Panc1 (cell line): ENCODE measurements at regions of chr7 and their contacts with region 1.

Region 1: DNA sequence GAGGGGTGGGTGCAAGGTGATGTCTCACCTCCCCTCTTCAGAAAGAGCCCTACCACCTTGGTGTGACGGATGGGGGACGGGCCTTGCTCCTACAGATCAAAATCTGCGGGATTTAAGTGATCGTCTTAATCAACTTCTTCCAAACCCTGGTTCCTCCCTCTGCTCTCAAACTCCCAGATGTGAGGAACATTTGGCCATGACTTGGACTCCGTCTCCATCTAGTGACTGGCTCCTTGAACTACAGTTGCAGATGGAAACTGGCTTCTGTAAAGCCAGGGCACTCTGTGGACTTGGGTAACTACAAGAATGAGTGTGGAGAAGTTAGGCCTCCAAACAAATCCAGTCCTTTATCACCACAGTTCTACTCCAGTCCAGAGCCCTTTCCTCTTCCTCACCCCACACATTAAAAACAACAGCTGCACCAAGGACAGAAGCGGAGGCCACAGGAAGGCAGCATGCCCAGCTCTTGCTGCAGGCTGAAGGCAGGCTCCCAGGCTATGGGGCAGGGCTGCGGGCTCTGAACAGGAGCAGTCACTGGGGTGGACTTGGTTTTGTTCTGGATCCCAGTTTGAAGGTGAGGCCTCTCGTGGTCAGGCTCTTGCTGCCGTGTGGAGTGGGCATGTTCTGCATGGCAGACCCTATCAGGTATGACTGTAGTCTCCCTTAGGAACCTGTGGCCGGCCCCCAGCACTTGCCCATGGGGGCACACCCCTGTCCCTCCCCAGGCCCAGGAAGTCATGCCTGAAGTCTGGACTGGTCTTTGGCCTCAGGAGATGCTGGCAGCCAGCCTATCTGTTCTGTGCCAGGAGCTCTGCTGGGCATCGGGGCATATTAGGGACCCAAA is 79.4 kb downstream of the VWC2 start:
- DNase-seq: peak; percentile 62
- ATAC-seq: peak; percentile 89
- H3K4me3 ChIP-seq: no peak overlapping the region
- H3K27ac ChIP-seq: no peak overlapping the region
- H3K4me1 ChIP-seq: no peaks in the 10 kb centered on the region
- H3K27me3 ChIP-seq: no peaks in the 10 kb centered on the region
- CTCF ChIP-seq: peak; percentile 92

Region 2: GRCh38 chr7:48109848-48110663 is 1742.8 kb before region 1 on chr7:
- CTCF ChIA-PET with region 1: no interaction called
- POLR2A ChIA-PET with region 1: no interaction called
- in situ Hi-C with region 1: no loop called
- intact Hi-C with region 1: loop called (anchors 5 kb)
- DNase-seq: peak; percentile 90
- ATAC-seq: peak; percentile 77
- H3K4me3 ChIP-seq: no peak overlapping the region
- H3K27ac ChIP-seq: peak overlapping the region; percentile 55
- H3K4me1 ChIP-seq: peaks cover 50% of the 10 kb centered on the region
- H3K27me3 ChIP-seq: no peaks in the 10 kb centered on the region
- CTCF ChIP-seq: peak; percentile 100

Region 3: GRCh38 chr7:48299580-48300169 is 1553.2 kb before region 1 on chr7:
- CTCF ChIA-PET with region 1: no interaction called
- POLR2A ChIA-PET with region 1: no interaction called
- in situ Hi-C with region 1: no loop called
- intact Hi-C with region 1: loop called (anchors 5 kb)
- DNase-seq: peak; percentile 52
- ATAC-seq: peak; percentile 97
- H3K4me3 ChIP-seq: no peak overlapping the region
- H3K27ac ChIP-seq: no peak overlapping the region
- H3K4me1 ChIP-seq: no peaks in the 10 kb centered on the region
- H3K27me3 ChIP-seq: no peaks in the 10 kb centered on the region
- CTCF ChIP-seq: peak; percentile 94

Region 4: DNA sequence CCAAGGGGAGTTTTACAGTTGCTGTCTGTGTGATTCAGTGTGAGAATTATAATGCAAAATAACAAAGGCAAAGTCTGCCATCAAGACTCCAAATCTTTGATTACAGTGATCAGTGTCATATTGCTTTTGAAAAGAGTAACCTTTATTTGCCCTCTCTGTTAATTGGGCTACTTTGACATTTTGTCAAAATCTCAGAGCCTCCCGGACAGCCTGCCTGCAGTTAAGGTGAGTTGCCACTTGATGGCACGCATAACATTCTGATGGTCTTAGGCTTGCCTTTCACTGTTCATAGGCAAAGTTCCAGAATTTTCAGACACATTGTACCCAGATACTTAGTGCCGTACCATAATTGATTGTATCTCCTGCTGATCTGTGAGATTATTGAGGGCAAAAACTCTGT is 1428.1 kb before region 1 on chr7:
- CTCF ChIA-PET with region 1: no interaction called
- POLR2A ChIA-PET with region 1: no interaction called
- in situ Hi-C with region 1: no loop called
- intact Hi-C with region 1: loop called (anchors 5 kb)
- DNase-seq: no peak
- ATAC-seq: no peak
- H3K4me3 ChIP-seq: no peak overlapping the region
- H3K27ac ChIP-seq: peak overlapping the region; percentile 56; the same call in 1 of the 2 replicates
- H3K4me1 ChIP-seq: peaks cover 25% of the 10 kb centered on the region
- H3K27me3 ChIP-seq: no peaks in the 10 kb centered on the region
- CTCF ChIP-seq: peak; percentile 88

Region 5: GRCh38 chr7:49001610-49002033 is 851.2 kb before region 1 on chr7:
- CTCF ChIA-PET with region 1: no interaction called
- POLR2A ChIA-PET with region 1: no interaction called
- in situ Hi-C with region 1: no loop called
- intact Hi-C with region 1: loop called (anchors 5 kb)
- DNase-seq: peak; percentile 32
- ATAC-seq: no peak
- H3K4me3 ChIP-seq: no peak overlapping the region
- H3K27ac ChIP-seq: no peak overlapping the region
- H3K4me1 ChIP-seq: no peaks in the 10 kb centered on the region
- H3K27me3 ChIP-seq: no peaks in the 10 kb centered on the region
- CTCF ChIP-seq: peak; percentile 82

Region 6: DNA sequence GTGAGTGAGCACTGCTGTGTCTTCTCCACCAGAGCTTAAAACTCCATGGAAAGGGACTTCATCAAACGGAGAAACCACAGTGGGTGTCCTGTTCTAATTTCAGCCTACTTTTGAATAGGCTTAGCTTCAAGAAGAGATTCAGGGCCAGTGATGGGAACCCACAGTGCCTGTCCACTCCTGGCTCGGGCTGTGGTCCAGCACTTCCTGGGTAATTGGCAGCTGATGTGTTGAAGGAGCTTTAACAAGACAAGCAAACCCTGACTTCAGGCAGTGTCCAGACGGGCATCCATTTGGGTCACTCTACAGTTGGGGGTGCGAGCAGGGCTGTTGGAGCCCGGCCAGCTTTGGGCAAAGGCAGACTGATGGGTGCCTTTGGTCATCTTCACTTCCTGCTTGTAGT is 64.9 kb before region 1 on chr7:
- CTCF ChIA-PET with region 1: interaction called, 14 read pairs
- POLR2A ChIA-PET with region 1: no interaction called
- in situ Hi-C with region 1: no loop called
- intact Hi-C with region 1: no loop called
- DNase-seq: no peak
- ATAC-seq: no peak
- H3K4me3 ChIP-seq: no peak overlapping the region
- H3K27ac ChIP-seq: no peak overlapping the region
- H3K4me1 ChIP-seq: no peaks in the 10 kb centered on the region
- H3K27me3 ChIP-seq: no peaks in the 10 kb centered on the region
- CTCF ChIP-seq: no peak